AG04449 (cell line): ENCODE measurements at regions of chr15 and their contacts with region 1.

Region 1: GRCh38 chr15:94335616-94336015 is 104.3 kb downstream of the MCTP2 start:
- DNase-seq: no peak
- H3K4me3 ChIP-seq: no peak overlapping the region
- CTCF ChIP-seq: no peak

Region 2: GRCh38 chr15:93974804-93975481 is 360.7 kb before region 1 on chr15:
- CTCF ChIA-PET with region 1: no interaction called
- POLR2A ChIA-PET with region 1: no interaction called
- DNase-seq: no peak
- H3K4me3 ChIP-seq: no peak overlapping the region
- CTCF ChIP-seq: peak; percentile 54

Region 3: GRCh38 chr15:94346282-94346681 is 10.7 kb after region 1 on chr15:
- CTCF ChIA-PET with region 1: interaction called, 10 read pairs
- POLR2A ChIA-PET with region 1: no interaction called
- DNase-seq: no peak
- H3K4me3 ChIP-seq: no peak overlapping the region
- CTCF ChIP-seq: no peak

Region 4: DNA sequence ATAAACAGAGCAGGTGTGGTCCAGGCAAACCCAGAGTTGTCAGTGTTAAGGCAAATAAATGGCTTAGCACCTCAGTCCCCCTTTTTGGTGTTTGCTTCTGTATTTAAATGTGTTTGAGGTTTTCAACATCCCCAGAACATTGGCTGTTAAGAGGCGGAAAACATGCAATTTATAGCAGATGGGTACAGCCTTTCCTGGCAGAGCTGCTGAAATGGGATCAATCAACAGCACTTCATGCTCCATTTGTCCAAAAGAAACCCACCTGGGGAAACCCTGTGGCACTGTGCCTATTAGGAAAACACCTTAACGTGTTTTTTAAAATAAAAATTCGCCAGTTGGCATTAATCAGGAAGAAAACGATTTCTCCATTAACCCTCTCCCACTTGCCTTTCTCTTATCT is 31.2 kb after region 1 on chr15:
- CTCF ChIA-PET with region 1: no interaction called
- POLR2A ChIA-PET with region 1: no interaction called
- DNase-seq: no peak
- H3K4me3 ChIP-seq: no peak overlapping the region
- CTCF ChIP-seq: no peak

Region 5: DNA sequence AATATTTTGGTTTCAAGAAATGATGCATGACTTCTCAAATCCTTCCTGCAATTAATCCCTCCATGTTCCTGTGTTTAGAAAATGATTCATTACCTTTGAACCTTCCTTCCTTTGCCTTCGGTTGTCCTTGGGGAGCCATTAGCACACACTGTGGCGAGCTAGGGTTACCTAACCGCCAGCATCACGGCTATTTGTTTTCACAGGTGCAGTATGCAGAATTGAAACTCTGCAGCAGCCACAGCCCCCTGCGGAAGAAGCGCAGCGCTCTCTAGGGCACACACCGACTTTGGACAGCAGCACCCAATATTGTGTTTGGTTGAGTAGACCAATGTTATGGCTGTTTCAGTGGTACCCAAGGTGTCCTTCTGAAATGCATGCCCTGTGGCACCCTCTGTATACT is 143.1 kb after region 1 on chr15:
- CTCF ChIA-PET with region 1: no interaction called
- POLR2A ChIA-PET with region 1: no interaction called
- DNase-seq: no peak
- H3K4me3 ChIP-seq: no peak overlapping the region
- CTCF ChIP-seq: no peak